ENCODE measurements at regions of chr5 and their contacts with region 1.

Region 1: GRCh38 chr5:141747152-141748141 is 65.4 kb upstream of the ARAP3 start:
- DNase-seq: peak; percentile 94 to 98 (median 96)
- H3K4me3 ChIP-seq: peak overlapping the region in 28 of 59 donors; percentile 1 to 47 (median 25)
- H3K27ac ChIP-seq: peak overlapping the region; percentile 2 to 94 (median 83)
- H3K27me3 ChIP-seq: no peaks in the 10 kb centered on the region
- CTCF ChIP-seq: peak in 9 of 56 donors; percentile 11 to 42 (median 22)

Region 2: DNA sequence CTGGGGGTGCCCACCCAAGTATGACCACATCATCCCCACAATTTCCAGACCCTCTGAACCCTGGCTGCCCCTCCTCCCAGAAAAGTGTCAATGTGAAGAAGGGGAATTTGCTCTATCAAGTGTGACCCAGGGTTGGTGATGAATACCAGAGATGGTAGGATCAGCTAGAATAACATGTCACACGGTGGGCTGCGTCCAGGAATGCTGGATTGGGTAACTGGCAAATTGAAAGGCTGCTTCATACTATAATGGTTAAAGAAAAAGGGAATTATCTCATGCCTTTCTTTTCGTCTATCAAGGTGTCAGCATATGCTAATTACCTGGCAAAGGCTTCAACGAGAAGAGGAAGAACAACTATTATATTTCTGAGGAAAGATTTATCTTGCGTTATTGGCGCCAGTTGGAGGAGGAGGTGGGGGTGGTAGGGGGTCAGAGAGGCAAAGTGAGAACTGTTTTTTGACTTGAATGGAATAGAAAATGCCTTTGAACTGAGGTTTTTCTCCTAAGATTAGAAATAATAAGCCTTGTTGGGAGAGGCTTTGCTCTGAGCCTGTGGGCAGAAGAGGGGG is 37.7 kb before region 1 on chr5:
- intact Hi-C with region 1: loop called (anchors 2 kb)
- DNase-seq: no peak
- H3K4me3 ChIP-seq: no peak overlapping the region
- H3K27ac ChIP-seq: no peak overlapping the region
- H3K27me3 ChIP-seq: no peaks in the 10 kb centered on the region
- CTCF ChIP-seq: no peak

Measured in dorsolateral prefrontal cortex (tissue), 120 donors.